SK-N-SH (cell line): ENCODE measurements at regions of chr20 and their contacts with region 1.

Region 1: DNA sequence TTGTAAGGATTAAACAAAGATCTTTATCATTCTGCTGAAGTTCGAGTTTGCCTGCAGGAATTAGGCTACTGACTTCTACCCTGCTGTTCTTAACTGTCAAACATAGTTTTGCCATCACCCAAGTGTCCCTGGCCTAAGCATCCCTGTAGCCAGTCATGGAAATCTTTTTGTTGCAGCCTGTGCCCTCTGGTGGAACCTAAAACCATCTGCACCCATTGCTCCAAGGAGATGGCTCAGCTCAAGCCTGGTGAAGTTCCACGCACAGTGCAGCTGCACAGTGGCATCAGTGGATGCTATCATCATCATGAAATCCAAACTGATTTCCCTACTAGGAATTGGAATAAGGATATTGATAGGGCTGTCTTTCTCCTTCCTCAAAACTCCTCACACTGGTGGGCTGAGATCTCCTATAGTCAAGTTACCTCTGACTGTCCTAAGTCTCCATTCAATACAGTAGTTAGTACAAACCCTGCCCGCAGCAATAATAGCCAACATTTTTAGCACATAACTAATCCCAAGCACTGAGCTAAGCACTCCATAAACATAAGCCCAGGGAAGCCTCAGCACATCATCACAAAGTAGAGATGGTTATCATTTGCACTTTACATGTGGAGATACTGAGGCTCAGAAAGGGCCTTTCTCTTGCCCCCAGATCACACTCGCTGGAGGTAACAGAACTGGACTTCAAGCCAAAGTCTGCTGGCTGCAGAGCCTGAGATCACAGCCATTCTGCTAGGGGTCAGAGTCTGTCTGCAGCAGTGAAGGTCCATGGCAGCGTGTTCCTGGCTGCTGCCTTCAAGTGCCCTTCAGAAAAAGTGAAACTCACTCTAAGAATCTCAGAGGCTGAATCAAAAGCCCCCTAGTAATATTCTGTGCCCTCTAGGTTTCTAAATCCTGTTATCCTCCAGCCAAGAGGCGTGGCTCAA is 77.2 kb upstream of the MC3R start:
- DNase-seq: peak; percentile 61
- H3K4me3 ChIP-seq: no peak overlapping the region
- H3K27ac ChIP-seq: no peak overlapping the region
- H3K4me1 ChIP-seq: peaks cover 0 to 2% of the 10 kb centered on the region in 2 experiments; a peak in 1 of 4 replicates
- H3K27me3 ChIP-seq: no peaks in the 10 kb centered on the region
- CTCF ChIP-seq: no peak
- EP300 ChIP-seq: no peak
- RAD21 ChIP-seq: peak; percentile 88

Region 2: DNA sequence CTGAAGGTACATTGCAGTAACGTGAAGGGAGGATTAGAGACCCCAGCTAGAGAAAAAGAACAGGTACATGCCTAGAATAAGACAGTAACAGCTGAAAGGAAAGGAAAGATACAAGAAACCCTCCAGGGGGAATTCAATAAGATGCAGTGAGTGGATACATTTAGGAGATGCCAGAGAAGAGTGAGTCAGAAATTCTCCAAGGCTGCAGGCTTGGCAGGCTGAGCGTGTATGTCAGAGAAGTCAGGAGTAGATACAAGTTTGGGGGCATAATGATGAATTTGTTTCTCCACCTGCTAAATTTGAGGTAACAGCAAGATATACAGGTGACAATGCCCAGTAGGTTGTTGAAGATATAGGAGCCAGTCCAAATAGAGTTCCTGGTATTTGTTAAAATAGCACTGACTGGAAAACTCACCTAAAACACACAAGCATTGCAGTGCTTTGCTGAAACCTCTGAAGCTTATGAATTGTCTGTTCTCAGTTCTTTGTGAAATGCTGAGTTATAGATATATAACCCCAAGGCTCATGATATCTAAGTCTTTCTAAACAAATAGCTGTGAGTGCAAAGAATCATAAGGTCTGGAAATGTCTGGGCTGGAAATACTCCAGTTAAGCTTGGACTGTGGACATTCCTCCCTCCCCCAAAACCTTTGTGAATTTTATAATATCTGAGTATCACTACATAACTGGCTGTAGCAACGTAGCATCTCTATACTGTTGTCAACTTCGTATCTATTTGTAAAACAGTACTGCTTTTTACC is 235.3 kb before region 1 on chr20:
- CTCF ChIA-PET with region 1: no interaction called
- POLR2A ChIA-PET with region 1: no interaction called
- DNase-seq: no peak
- H3K4me3 ChIP-seq: no peak overlapping the region
- H3K27ac ChIP-seq: no peak overlapping the region
- H3K4me1 ChIP-seq: no peaks in the 10 kb centered on the region
- H3K27me3 ChIP-seq: no peaks in the 10 kb centered on the region
- CTCF ChIP-seq: no peak
- EP300 ChIP-seq: no peak
- RAD21 ChIP-seq: no peak

Region 3: GRCh38 chr20:56160956-56161355 is 10.4 kb before region 1 on chr20:
- CTCF ChIA-PET with region 1: interaction called, 12 read pairs
- POLR2A ChIA-PET with region 1: no interaction called
- DNase-seq: no peak
- H3K4me3 ChIP-seq: no peak overlapping the region
- H3K27ac ChIP-seq: no peak overlapping the region
- H3K4me1 ChIP-seq: no peaks in the 10 kb centered on the region; a peak in 1 of 4 replicates
- H3K27me3 ChIP-seq: no peaks in the 10 kb centered on the region
- CTCF ChIP-seq: no peak
- EP300 ChIP-seq: no peak
- RAD21 ChIP-seq: no peak